ENCODE measurements at regions of chr2 and their contacts with region 1.

Region 1: GRCh38 chr2:227154986-227155774 is 8.8 kb downstream of the COL4A4 start:
- DNase-seq: no peak
- H3K4me3 ChIP-seq: no peak overlapping the region
- CTCF ChIP-seq: no peak
- POLR2A ChIP-seq: no peak

Region 2: DNA sequence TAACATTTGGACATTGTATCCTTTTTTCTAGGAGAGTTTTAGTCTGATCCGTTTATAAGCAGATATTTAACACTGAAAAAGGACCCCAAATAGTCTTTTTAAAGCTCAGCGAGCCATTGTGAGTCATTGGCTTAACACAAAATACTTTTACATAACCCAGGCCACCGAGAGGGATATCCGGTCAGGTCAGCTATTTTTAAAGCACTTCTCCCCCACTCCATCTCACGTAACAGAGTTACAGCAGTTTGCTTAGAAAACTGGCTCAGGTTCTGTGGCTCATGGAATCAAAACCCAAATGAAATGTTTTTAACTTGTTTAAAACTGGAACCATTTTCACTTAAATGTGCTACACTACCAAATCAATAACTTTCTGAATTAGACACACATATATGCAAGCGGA is 33.1 kb after region 1 on chr2:
- intact Hi-C with region 1: loop called (anchors 1 kb)
- DNase-seq: no peak
- H3K4me3 ChIP-seq: no peak overlapping the region
- CTCF ChIP-seq: no peak
- POLR2A ChIP-seq: no peak